ENCODE measurements at regions of chr21 and their contacts with region 1.

Region 1: GRCh38 chr21:17512253-17513213 is at the start of gene CXADR:
- DNase-seq: peak; percentile 63 to 76
- ATAC-seq: peak; percentile 86 to 98 (median 90)
- H3K4me3 ChIP-seq: peak within 1 kb of the TSS; percentile 46 to 80 (median 66)
- H3K27ac ChIP-seq: peak within 1 kb of the TSS; percentile 50 to 94 (median 86)
- H3K4me1 ChIP-seq: peaks cover 0 to 24% (median 11%) of the 10 kb centered on the region in 9 donors
- H3K27me3 ChIP-seq: peaks cover 0 to 58% (median 12%) of the 10 kb centered on the region in 7 donors
- CTCF ChIP-seq: peak; percentile 35 to 60 (median 53)
- total RNA-seq, gene CXADR: 16.7 to 42.1 (median 28.5) TPM

Region 2: GRCh38 chr21:17461014-17461413 is 51.5 kb before region 1 on chr21:
- intact Hi-C with region 1: loop called in 3 of 10 experiments (anchors 2 to 5 kb)
- DNase-seq: peak in 1 of 2 donors; percentile 69
- ATAC-seq: peak; percentile 87 to 98 (median 92)
- H3K4me3 ChIP-seq: no peak overlapping the region
- H3K27ac ChIP-seq: peak overlapping the region in 9 of 10 donors; percentile 7 to 80 (median 67)
- H3K4me1 ChIP-seq: peaks cover 0 to 25% (median 12%) of the 10 kb centered on the region in 9 donors
- H3K27me3 ChIP-seq: no peaks in the 10 kb centered on the region
- CTCF ChIP-seq: no peak

Region 3: DNA sequence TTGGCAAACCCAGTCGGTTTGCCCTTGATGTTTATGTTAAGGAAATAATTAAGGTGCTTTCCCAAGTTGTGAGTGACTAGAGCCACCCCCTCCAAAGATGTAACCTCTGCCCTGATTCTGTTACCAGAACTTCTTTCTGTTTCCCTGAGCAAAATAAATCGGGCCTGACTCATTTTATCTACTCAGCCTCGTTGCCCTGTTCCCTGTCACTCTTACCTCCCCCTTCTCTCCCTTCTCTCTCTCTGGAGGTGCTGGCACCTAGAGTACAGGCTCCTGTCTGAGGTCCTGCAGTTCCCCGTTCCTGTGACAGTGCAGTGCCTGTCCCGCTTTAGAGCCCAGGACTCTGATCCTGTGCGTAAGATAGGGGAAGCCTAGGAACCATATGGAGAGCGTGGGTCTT is 35.7 kb after region 1 on chr21:
- intact Hi-C with region 1: loop called in 2 of 10 experiments (anchors 5 kb)
- DNase-seq: no peak
- ATAC-seq: peak; percentile 25 to 93 (median 76)
- H3K4me3 ChIP-seq: no peak overlapping the region
- H3K27ac ChIP-seq: peak overlapping the region in 2 of 10 donors; percentile 20 to 23
- H3K4me1 ChIP-seq: peaks cover 0 to 18% (median 0%) of the 10 kb centered on the region in 9 donors
- H3K27me3 ChIP-seq: no peaks in the 10 kb centered on the region
- CTCF ChIP-seq: peak in 1 of 9 donors; percentile 10

Region 4: GRCh38 chr21:17570786-17571185 is 58.3 kb after region 1 on chr21:
- intact Hi-C with region 1: no loop called
- DNase-seq: no peak
- ATAC-seq: no peak
- H3K4me3 ChIP-seq: no peak overlapping the region
- H3K27ac ChIP-seq: no peak overlapping the region
- H3K4me1 ChIP-seq: no peaks in the 10 kb centered on the region
- H3K27me3 ChIP-seq: no peaks in the 10 kb centered on the region
- CTCF ChIP-seq: no peak

Region 5: DNA sequence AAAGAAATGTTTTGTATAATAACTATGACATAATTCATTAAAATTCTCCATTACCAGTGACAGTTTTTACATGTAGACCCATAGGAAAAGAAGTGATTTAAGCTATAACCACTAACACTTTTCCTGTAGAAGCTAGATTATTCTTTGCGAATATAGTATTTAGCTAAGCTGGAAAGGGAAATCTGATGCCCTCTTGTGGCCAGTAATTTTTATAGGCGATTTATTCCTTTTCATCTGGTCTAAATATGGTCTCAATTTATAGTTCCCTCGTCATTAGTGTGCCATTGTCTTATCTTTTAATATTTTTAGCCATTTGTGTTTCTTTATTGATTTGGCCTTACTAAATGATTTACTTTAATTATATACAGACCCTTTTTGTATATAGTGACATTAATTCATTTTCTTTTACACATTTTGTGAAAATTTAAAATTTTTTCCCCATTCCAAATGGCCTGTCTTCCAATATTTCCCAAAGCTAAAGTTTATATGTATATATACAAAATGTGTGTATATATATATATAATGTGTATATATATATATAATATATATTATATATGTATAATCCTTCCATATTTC is 73.4 kb after region 1 on chr21:
- intact Hi-C with region 1: loop called in 1 of 10 experiments (anchors 10 kb)
- DNase-seq: peak in 1 of 2 donors; percentile 11
- ATAC-seq: no peak
- H3K4me3 ChIP-seq: no peak overlapping the region
- H3K27ac ChIP-seq: no peak overlapping the region
- H3K4me1 ChIP-seq: peaks cover 0 to 3% (median 0%) of the 10 kb centered on the region in 9 donors
- H3K27me3 ChIP-seq: no peaks in the 10 kb centered on the region
- CTCF ChIP-seq: peak; percentile 11 to 77 (median 68)